OCI-LY7 (cell line): ENCODE measurements at regions of chr10 and their contacts with region 1.

Region 1: DNA sequence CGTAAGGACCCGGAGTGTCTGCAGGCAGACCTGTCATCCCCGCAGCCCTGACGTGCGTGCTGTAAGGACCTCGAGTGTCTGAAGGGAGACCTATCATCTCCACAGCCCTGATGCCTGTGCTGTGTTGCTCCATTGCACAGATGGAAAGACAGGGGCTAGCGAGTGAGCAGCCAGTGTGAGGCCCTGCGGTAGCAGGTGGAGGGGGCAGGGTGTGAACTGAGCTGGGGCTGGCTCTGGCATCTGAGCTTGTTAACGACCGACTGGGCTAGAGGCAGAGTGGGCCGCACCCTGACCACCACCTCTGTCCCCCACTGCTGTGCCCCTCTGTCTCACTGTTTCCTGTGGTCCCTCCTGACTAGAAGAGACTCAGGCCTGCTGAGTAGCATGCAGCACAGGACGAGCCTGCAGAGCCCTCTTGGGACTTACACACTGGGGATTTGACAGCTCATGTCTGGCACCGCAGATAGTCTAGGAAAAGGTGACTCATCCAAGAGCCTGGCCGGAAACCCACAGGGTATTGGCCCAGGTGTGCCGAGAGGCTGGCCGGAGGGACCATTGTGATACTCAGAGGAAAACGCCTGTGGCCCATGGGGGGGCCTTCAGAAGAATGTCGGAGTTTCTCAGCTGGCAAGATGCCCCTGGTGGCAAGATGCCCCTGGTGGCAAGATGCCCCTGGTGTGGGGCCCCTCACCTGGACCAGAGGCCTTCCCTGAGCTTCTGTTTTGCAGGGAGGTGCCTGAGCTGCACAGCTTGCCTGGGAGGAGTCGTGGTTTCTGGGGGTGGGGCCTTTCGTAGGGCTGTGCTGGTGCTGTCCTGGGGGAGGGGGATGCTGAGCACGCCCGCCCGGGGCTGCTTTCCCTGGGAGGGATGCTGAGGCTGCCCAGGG is 34.3 kb downstream of the INPP5A start:
- DNase-seq: peak; percentile 98
- H3K4me3 ChIP-seq: peak overlapping the region; percentile 55
- H3K27ac ChIP-seq: peak overlapping the region; percentile 86
- H3K4me1 ChIP-seq: peaks cover 30% of the 10 kb centered on the region
- CTCF ChIP-seq: peak; percentile 55

Region 2: DNA sequence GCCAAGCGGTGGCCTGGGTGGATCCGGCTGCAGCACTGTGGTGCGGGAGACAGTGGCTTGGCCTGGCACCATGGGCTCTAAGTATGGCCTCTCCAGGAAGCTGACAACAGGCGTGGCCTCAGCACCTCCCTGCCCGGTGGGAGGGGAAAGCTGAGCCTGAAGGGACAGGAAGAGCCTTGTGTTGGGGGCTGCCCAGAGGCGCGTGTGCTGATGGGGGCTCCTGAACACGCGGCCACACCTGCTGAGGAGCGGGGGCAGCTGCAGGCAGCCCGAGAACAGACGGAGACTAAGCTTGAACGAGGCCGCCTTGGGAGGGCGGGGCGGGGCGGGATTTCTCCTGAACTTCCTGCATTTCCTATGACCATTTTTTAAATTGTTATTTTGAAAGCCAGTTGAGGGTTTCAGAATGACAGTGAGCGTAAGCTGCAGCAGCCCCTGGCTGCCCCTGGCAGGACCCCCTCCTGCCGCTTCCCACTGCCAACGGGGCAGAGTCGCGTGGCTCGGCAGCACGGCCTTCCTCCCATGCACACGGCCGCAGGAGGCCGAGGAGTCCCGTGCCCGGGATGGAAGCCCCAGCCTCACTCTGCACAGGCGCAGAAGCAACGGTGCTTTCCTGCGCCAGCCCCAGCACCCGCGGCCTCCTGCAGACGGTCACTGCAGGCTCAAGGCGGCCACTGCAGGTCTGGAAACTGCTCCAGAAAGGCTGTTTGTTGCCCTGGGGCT is 341.9 kb before region 1 on chr10:
- CTCF ChIA-PET with region 1: no interaction called
- POLR2A ChIA-PET with region 1: no interaction called
- intact Hi-C with region 1: no loop called
- DNase-seq: no peak
- H3K4me3 ChIP-seq: no peak overlapping the region
- H3K27ac ChIP-seq: no peak overlapping the region
- H3K4me1 ChIP-seq: no peaks in the 10 kb centered on the region
- CTCF ChIP-seq: no peak

Region 3: DNA sequence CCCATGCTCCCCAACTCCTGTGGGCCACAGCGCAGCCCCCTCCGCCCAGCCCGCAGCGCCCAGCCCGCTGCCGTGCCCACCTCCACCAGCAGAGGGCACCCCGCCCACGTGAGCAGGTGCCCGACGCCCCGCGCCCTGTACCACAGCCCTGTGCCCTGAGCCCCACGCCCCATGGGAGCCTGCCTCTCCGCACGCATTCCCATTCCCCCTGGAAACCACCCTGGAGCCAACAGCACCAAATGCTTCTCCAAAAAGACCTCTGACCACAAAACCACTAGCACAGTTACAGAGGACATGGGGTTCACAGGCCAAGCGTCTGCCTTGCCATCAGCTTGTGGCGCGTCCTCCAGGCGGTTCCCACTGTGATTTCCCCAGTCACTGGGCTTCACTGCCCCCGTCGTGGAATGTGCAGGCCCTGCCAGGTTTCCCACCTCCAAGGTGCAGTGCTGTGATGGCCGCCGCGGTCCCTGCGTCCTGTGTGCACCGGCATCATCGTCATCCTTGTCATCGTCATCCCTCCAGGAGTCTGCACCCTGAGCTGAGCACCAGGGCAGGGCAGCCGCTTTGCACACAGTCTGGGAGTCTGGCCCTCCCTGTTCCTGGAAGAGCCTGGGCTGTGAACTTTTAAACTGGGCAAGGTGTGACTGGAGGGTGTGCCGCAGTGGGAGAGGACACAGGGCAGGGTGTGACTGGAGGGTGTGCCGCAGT is 113.1 kb before region 1 on chr10:
- CTCF ChIA-PET with region 1: interaction called, 3 read pairs
- POLR2A ChIA-PET with region 1: no interaction called
- intact Hi-C with region 1: loop called (anchors 5 kb)
- DNase-seq: peak; percentile 54
- H3K4me3 ChIP-seq: no peak overlapping the region
- H3K27ac ChIP-seq: no peak overlapping the region
- H3K4me1 ChIP-seq: no peaks in the 10 kb centered on the region
- CTCF ChIP-seq: peak; percentile 95

Region 4: GRCh38 chr10:132518572-132519381 is 53.1 kb before region 1 on chr10:
- CTCF ChIA-PET with region 1: no interaction called
- POLR2A ChIA-PET with region 1: no interaction called
- intact Hi-C with region 1: no loop called
- DNase-seq: no peak
- H3K4me3 ChIP-seq: no peak overlapping the region
- H3K27ac ChIP-seq: no peak overlapping the region
- H3K4me1 ChIP-seq: peaks cover 3% of the 10 kb centered on the region
- CTCF ChIP-seq: no peak

Region 5: DNA sequence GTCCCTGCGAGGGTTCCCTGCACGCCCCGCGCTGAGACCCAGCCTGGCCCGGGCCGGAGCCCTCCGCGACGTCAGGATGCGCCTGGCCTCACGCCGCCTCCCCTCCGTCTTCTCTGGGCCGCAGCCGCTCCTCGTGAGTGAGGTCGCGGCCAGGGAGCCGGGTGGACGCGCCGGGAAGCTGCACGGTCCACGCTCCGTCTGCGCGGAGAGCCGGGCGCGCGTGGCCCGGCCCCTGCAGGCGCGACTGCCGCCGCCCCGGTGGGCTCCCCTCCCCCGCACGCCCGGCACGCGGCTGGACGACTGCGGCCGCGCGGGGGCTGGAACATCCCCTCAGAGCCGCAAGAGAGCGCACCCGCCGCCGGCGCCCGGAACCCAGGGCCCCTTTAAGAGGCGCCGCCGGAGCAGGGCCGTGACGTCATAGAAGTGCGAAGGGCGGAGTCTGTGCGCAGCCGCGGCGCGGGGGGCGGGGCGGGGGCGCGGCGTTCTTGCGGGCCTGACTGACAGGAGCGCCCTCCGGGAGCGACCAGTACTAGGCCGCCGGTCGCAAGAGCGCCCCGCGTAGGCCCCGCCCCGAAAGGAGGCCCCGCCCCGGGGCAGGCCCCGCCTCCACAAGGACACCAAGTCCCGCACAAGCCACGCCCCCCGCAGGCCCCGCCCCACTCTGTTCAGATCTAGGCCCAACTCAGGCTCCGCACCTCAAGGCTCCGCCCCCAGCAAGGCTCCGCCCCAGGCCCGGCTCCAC is 34.8 kb before region 1 on chr10:
- CTCF ChIA-PET with region 1: interaction called, 9 read pairs
- POLR2A ChIA-PET with region 1: interaction called, 3 read pairs
- intact Hi-C with region 1: loop called (anchors 1 kb)
- DNase-seq: peak; percentile 98
- H3K4me3 ChIP-seq: peak overlapping the region; percentile 75
- H3K27ac ChIP-seq: no peak overlapping the region
- H3K4me1 ChIP-seq: peaks cover 45% of the 10 kb centered on the region
- CTCF ChIP-seq: peak; percentile 47

Region 6: DNA sequence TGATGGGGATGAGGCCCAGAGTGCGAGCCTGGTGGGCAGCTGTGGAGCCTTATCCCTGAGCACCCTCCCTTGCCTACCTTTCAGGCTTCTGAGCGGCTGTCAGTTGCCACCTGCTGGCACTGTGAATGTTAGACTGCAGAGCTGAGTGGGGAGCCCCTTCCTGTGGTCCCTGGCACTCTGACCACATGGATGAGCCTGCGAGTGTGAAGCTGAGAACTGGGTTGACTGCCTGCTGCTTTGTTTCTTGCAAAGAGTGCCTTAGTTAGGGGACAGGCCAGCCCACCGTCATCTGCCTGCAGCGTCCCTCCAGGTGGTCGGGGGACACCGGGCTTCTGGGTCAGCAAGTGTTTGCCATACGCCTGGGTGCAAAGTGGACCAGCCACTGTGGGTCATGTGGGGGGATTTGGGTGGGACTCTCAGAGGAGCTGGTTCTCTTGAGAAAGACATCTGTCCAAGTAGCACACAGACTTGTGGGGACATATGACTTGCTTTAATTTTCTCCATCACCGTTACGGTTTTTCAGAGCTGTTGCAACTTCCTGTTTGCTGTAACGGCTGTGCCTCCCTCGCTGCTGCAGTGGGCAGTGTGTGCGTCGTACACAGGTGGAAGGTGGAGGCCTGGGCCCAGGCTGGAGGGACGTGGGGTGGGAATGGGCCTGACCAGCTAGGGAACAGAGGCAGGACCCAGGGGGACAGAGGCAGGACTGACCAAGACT is 20.6 kb before region 1 on chr10:
- CTCF ChIA-PET with region 1: interaction called, 6 read pairs
- POLR2A ChIA-PET with region 1: interaction called, 16 read pairs
- intact Hi-C with region 1: loop called (anchors 2 kb)
- DNase-seq: peak; percentile 84
- H3K4me3 ChIP-seq: peak overlapping the region; percentile 38
- H3K27ac ChIP-seq: peak overlapping the region; percentile 86
- H3K4me1 ChIP-seq: peaks cover 62% of the 10 kb centered on the region
- CTCF ChIP-seq: peak; percentile 51; the same call in 1 of the 2 replicates

Region 7: GRCh38 chr10:132560241-132560731 is 11.6 kb before region 1 on chr10:
- CTCF ChIA-PET with region 1: interaction called, 16 read pairs
- POLR2A ChIA-PET with region 1: interaction called, 8 read pairs
- intact Hi-C with region 1: loop called (anchors 2 kb)
- DNase-seq: peak; percentile 80
- H3K4me3 ChIP-seq: peak overlapping the region; percentile 48
- H3K27ac ChIP-seq: peak overlapping the region; percentile 79
- H3K4me1 ChIP-seq: peaks cover 62% of the 10 kb centered on the region
- CTCF ChIP-seq: no peak

Region 8: DNA sequence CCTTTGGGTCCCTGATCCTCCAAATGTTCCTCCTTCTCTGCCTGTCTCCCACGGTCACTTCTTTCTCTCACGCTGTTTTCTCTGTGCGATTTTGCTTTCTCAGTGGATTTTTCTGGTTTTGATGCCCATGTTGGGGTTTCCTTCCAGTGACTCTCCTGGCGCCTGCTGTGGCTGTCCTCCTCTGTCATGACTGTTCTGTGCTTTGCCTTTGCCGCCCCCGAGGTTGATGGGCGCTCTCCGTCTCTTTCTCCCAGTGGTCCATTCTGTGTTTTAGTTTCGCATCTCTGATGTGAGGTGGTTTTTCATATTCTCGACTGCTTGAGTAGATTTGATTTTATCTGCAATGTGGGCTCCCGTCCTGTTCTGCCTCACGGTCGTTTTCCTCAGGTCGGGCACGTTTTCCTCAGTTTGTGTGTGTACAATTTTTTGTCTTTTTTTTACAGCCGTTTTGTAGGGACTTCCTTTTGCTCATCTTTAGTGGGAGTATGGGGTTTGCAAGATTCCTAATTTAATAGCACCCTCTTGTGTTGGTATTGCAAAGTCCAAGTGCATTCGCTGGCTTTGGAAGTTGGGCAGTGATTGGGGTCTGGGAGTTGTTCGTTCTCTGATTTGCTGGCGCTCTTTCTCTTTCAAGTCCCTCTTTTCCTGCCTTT is 65.7 kb after region 1 on chr10:
- CTCF ChIA-PET with region 1: no interaction called
- POLR2A ChIA-PET with region 1: no interaction called
- intact Hi-C with region 1: loop called (anchors 5 kb)
- DNase-seq: peak; percentile 69
- H3K4me3 ChIP-seq: no peak overlapping the region
- H3K27ac ChIP-seq: no peak overlapping the region
- H3K4me1 ChIP-seq: no peaks in the 10 kb centered on the region
- CTCF ChIP-seq: peak; percentile 91

Region 9: DNA sequence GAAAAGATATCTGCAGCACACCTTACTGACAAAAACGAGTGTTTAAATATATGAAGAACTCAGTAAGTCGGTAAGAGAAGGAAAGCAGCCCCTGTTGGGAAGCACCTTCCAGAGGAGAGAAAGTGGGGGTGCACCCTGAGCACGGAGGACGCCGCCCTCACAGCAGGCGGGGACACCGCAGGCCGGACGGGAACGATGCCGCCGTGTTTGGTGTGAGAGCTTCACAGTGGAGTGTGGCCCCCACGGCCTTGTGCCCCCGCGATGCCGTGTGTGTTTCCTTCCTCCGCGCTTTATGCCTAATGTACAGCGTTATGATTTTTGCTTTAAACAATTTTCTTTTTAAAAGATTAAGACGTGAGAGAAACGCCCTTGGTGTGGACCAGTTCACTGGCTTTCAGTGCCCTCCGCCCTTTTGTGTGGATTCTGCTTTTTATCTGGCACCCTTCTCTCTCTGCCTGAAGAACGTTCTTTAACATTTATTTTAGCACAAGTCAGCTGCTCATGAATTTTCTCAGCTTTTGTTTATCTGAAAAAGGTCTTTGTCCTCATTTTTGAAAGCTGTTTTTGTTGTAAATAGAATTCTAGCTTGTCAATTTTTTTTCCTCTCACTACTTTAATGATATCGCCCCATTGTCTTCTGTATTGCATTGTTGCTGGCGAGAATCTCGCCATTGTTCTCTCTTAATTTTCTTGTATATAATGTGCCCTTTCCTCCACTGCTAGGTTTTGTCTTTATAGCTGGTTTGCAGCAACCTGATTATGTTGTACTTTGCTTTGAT is 76.4 kb after region 1 on chr10:
- CTCF ChIA-PET with region 1: no interaction called
- POLR2A ChIA-PET with region 1: no interaction called
- intact Hi-C with region 1: no loop called
- DNase-seq: no peak
- H3K4me3 ChIP-seq: no peak overlapping the region
- H3K27ac ChIP-seq: no peak overlapping the region
- H3K4me1 ChIP-seq: no peaks in the 10 kb centered on the region
- CTCF ChIP-seq: no peak